Ascending aorta (tissue), 2 donors: ENCODE measurements at regions of chr10 and their contacts with region 1.

Region 1: GRCh38 chr10:42552493-42553407 is 85.6 kb downstream of the ZNF33B start:
- DNase-seq: peak; percentile 85 to 98
- H3K4me3 ChIP-seq: peak overlapping the region; percentile 68 to 87
- H3K27ac ChIP-seq: peak overlapping the region; percentile 29 to 57
- H3K4me1 ChIP-seq: peaks cover 3 to 6% of the 10 kb centered on the region in 2 donors
- H3K27me3 ChIP-seq: no peaks in the 10 kb centered on the region
- CTCF ChIP-seq: no peak

Region 2: DNA sequence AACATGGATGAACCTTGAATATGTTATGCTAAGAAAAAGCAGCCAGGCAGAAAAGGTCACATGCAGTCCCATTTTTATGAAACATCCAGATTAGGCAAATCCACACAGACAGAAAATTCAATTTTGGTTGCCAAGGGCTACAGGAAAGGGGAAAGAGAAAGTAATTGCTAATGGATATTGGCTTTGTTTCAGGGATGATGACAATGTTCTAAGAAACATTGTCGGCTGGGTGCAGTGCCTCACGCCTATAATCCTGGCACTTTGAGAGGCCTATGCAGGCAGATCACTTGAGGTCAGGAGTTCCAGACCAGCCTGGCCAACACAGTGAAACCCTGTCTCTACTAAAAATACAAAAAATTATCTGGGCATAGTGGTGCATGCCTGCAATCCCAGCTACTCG is 62.7 kb after region 1 on chr10:
- intact Hi-C with region 1: no loop called
- DNase-seq: no peak
- H3K4me3 ChIP-seq: no peak overlapping the region
- H3K27ac ChIP-seq: no peak overlapping the region
- H3K4me1 ChIP-seq: no peaks in the 10 kb centered on the region
- H3K27me3 ChIP-seq: no peaks in the 10 kb centered on the region
- CTCF ChIP-seq: no peak

Region 3: GRCh38 chr10:42638055-42638820 is 85.5 kb after region 1 on chr10 and contains the start of gene ZNF33B:
- intact Hi-C with region 1: loop called (anchors 5 kb)
- DNase-seq: peak; percentile 73 to 94
- H3K4me3 ChIP-seq: peak within 1 kb of the TSS; percentile 82 to 86
- H3K27ac ChIP-seq: peak within 1 kb of the TSS; percentile 90 to 91
- H3K4me1 ChIP-seq: no peaks in the 10 kb centered on the region
- H3K27me3 ChIP-seq: no peaks in the 10 kb centered on the region
- CTCF ChIP-seq: no peak
- total RNA-seq, gene ZNF33B: 8.6 TPM

Region 4: GRCh38 chr10:43138021-43138756 is 585.4 kb after region 1 on chr10 and contains the start of gene CSGALNACT2:
- intact Hi-C with region 1: loop called (anchors 5 kb)
- DNase-seq: peak; percentile 64 to 95
- H3K4me3 ChIP-seq: peak within 1 kb of the TSS; percentile 85 to 87
- H3K27ac ChIP-seq: peak within 1 kb of the TSS; percentile 92 to 98
- H3K4me1 ChIP-seq: peaks cover 0 to 15% of the 10 kb centered on the region in 2 donors
- H3K27me3 ChIP-seq: no peaks in the 10 kb centered on the region
- CTCF ChIP-seq: no peak
- total RNA-seq, gene CSGALNACT2: 19.7 TPM

Region 5: DNA sequence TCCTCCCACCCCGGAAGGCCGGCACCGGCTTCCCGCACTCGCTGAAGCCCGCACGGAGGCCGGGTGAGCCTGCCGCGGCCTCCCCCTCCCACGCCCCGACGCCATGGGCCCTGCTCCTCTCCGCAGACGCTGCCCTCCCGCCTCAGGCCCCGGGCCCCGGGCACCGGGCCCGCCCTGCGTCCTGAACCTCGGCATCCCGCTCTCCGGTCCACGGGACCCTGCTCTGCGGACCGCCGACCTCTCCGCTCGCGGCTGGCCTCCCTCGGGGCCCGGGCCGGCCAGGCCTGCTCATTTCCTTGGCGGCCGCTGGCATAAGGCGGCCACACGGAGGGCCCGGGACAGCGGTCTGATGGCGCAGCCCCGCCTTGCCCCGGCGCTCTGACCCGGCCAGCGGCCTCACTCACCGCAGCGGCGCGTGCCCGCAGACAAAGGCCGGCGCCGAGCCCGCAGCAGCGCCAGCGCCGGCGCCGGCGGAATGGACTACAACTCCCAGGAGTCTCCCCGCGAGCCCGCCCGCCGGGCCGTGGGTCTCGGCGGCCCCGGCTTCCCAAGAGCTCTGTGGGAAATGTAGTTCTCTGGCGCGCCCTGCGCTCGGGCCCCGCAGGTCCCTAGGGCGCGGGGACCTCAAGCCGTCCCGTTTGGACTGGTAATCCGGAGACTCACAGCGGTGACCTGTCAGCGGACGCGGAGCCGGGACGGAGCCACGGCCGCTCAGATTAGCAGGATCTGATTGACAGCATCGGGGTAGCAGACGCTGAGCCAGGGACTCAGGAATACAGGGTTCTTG is 1095.8 kb after region 1 on chr10 and contains the start of gene ZNF32:
- intact Hi-C with region 1: loop called (anchors 5 kb)
- DNase-seq: peak; percentile 32 to 90
- H3K4me3 ChIP-seq: peak within 1 kb of the TSS; percentile 85 to 95
- H3K27ac ChIP-seq: peak within 1 kb of the TSS; percentile 73 to 78
- H3K4me1 ChIP-seq: peaks cover 0 to 5% of the 10 kb centered on the region in 2 donors
- H3K27me3 ChIP-seq: no peaks in the 10 kb centered on the region
- CTCF ChIP-seq: no peak
- total RNA-seq, gene ZNF32: 10.9 TPM